Activated B cell treated with CpG ODN at 0.5 μM for 24 hours (primary cell): ENCODE measurements at regions of chr2 and their contacts with region 1.

Region 1: GRCh38 chr2:73828818-73829570 is at the start of gene STAMBP:
- DNase-seq: peak; percentile 80
- ATAC-seq: peak; percentile 92
- H3K4me3 Mint-ChIP-seq: peak within 1 kb of the TSS; percentile 98
- H3K27ac Mint-ChIP-seq: peak within 1 kb of the TSS; percentile 96
- H3K4me1 Mint-ChIP-seq: peaks cover 41% of the 10 kb centered on the region
- H3K27me3 Mint-ChIP-seq: no peaks in the 10 kb centered on the region
- CTCF ChIP-seq: no peak
- total RNA-seq, gene STAMBP: 32.2 and 35.4 TPM in 2 replicates

Region 2: DNA sequence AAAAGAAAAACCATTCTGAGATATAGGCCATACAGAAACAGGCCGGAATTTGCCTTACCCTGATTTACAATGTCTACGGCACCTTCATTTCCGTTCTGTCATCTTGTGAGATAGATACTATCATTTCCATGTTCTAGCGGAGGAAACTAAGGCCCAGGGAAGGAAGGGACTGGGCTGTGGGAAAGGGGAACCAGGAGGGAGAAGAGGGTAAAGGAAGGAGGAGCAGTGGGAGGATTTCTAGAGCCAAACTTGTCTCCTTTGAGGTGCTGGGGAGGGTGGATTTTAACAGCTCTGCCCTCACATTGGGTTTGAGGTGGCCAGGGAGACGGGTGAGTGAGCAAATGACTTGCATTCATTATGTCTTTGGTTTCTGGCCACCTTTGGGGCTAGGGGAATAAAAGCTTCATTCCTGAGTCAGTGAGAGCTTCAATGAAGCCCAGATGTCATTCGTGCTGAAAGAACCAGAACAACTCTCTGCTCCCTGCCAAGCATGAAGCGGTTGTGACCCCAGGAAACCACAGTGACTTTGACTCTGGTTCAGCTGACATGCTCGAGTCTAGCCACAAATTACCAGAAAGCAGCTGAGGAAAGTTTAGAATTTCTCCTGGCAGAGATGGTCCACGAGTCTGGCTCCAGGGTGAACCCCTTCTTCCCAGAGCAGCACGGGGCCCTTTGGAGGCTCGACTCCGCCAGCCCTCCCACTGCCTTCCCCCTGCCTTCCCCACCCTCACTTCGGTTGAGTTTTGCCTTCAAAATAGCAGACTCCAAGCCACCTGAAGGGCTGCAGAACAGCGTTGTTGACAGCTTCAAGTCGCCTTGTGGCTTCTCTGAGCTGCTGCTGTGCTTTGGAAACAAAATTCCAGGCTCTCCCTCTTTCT is 67.6 kb after region 1 on chr2:
- CTCF ChIA-PET with region 1: no interaction called
- POLR2A ChIA-PET with region 1: no interaction called
- intact Hi-C with region 1: no loop called
- DNase-seq: no peak
- ATAC-seq: peak; percentile 72
- H3K4me3 Mint-ChIP-seq: no peak overlapping the region
- H3K27ac Mint-ChIP-seq: no peak overlapping the region
- H3K4me1 Mint-ChIP-seq: peaks cover 6% of the 10 kb centered on the region
- H3K27me3 Mint-ChIP-seq: peaks cover 4% of the 10 kb centered on the region
- CTCF ChIP-seq: no peak

Region 3: DNA sequence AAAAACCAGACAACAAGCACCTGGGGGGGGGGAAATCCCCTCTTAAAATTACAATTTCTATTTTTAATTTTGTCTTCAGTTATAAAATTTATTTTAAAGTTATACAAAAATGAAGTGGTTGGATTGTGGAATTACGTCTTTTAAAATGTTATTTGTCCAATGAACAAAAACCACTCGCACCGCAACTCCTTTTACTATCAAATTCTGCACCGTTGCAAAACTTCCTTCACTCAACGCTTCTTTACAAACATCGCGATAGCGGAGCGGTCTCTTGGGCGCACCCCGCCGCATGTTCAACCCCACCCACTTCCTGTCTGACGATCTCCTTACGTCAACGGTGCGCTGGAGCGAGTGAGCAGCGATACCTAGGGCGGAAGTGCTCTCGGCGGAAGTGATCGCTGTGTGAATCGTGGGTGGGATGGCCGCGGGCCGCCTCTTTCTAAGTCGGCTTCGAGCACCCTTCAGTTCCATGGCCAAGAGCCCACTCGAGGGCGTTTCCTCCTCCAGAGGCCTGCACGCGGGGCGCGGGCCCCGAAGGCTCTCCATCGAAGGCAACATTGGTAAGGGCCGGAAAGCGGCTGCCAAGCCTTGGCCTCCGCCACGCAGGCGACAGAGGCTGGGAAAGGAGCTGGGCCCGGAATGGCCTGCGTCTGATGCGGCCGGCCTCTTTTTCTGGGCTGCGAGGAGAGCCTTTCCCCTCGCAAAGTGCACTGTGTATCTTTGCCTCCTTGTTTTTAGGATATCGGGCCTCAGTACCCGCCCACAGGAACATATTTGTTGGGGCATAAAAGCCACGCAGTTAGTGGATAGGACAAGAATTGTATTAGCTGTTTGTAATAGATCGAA is 97.7 kb after region 1 on chr2 and contains the start of gene DGUOK:
- CTCF ChIA-PET with region 1: no interaction called
- POLR2A ChIA-PET with region 1: interaction called, 5 read pairs
- intact Hi-C with region 1: loop called (anchors 1 kb)
- DNase-seq: peak; percentile 88
- ATAC-seq: peak; percentile 95
- H3K4me3 Mint-ChIP-seq: peak within 1 kb of the TSS; percentile 92
- H3K27ac Mint-ChIP-seq: peak within 1 kb of the TSS; percentile 93
- H3K4me1 Mint-ChIP-seq: peaks cover 60% of the 10 kb centered on the region
- H3K27me3 Mint-ChIP-seq: no peaks in the 10 kb centered on the region
- CTCF ChIP-seq: no peak
- total RNA-seq, gene DGUOK: 70.1 and 77.4 TPM in 2 replicates

Region 4: GRCh38 chr2:74085976-74086375 is 257.0 kb after region 1 on chr2:
- CTCF ChIA-PET with region 1: interaction called, 13 read pairs
- POLR2A ChIA-PET with region 1: interaction called, 10 read pairs
- intact Hi-C with region 1: no loop called
- DNase-seq: no peak
- ATAC-seq: no peak
- H3K4me3 Mint-ChIP-seq: no peak overlapping the region
- H3K27ac Mint-ChIP-seq: no peak overlapping the region
- H3K4me1 Mint-ChIP-seq: no peaks in the 10 kb centered on the region
- H3K27me3 Mint-ChIP-seq: no peaks in the 10 kb centered on the region
- CTCF ChIP-seq: no peak

Region 5: DNA sequence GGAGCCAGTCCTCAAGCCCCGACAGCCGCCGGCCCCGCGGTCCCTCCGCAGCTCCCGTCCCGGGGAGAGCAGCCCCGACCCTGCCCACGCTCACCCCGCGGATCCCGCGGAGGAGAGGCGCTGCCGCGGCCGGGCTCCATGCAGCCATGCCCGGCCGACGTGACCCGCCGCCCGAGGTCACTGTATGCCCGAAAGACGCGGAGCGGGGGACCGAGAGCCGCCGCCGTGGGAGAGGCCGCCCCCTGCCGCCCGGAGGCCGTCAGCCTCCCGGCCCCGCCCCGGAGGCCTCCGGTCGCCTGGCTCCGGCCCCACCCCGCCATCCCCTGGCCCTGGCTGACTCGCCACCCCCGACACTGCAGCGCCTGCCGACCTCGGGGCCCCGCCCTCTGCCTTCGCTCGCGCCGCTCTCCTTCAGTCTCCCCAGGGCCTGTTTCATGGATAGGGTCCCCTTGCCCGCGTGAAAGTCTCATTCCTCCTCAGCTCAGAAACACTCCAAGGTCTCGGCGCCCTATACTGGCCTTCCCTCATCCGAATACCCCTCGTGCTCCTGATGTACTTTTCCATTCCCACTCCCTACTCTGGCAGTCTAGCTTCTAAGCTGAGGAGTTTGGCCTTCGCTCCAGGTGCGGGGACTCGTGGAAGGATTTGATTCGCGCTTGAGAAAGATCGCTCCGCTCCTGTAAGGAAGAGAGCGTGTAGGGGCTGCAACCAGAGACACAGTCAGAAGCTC is 318.9 kb after region 1 on chr2 and contains the start of gene BOLA3:
- CTCF ChIA-PET with region 1: interaction called, 59 read pairs
- POLR2A ChIA-PET with region 1: interaction called, 14 read pairs
- intact Hi-C with region 1: loop called (anchors 1 kb)
- DNase-seq: peak; percentile 86
- ATAC-seq: peak; percentile 97
- H3K4me3 Mint-ChIP-seq: no peak within 1 kb of the TSS
- H3K27ac Mint-ChIP-seq: no peak within 1 kb of the TSS
- H3K4me1 Mint-ChIP-seq: peaks cover 7% of the 10 kb centered on the region
- H3K27me3 Mint-ChIP-seq: no peaks in the 10 kb centered on the region
- CTCF ChIP-seq: no peak
- total RNA-seq, gene BOLA3: 18.8 and 19.1 TPM in 2 replicates

Region 6: GRCh38 chr2:74334931-74335333 is 505.9 kb after region 1 on chr2:
- CTCF ChIA-PET with region 1: interaction called, 114 read pairs
- POLR2A ChIA-PET with region 1: interaction called, 4 read pairs
- intact Hi-C with region 1: loop called (anchors 1 kb)
- DNase-seq: peak; percentile 62
- ATAC-seq: peak; percentile 66
- H3K4me3 Mint-ChIP-seq: no peak overlapping the region
- H3K27ac Mint-ChIP-seq: no peak overlapping the region
- H3K4me1 Mint-ChIP-seq: no peaks in the 10 kb centered on the region
- H3K27me3 Mint-ChIP-seq: no peaks in the 10 kb centered on the region
- CTCF ChIP-seq: peak; percentile 96